ENCODE measurements at regions of chr10 and their contacts with region 1.

Region 1: DNA sequence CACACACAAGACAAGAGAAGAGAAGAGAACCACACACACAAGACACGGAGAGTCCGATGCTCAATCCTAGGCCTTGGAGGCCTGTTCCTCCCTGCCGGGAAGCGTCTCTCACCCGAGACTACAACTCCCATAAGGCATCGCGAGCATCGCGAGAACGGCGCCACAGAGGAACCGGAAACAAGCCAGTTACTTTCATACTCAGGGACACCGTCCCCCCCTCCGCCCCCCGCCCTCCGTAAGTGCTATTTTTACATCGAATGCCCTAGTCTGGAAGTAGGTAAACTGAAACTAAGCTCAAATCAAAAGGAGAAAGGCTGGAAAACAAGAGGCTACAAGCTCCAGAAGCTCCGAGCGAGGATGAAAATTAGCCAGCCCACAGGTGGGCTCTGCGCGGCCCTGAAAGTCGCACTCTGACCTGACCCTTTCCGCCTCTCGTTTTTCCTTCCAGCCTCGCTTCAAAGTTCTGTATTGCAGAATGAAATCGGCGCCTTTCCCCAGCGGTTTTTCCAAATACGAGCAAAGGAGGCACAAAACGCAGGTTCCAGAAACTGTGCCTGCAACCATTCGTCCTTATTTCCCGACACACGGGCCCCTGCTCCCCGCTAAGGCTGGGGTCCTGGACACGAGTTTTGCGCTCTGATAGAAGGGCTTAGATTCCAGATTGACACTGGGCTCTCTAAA is 11.5 kb upstream of the DNAJC12 start:
- DNase-seq: peak; percentile 98
- H3K4me3 ChIP-seq: peak overlapping the region; percentile 66 to 92 (median 70)
- H3K27ac ChIP-seq: peak overlapping the region; percentile 88 to 98 (median 94)
- H3K4me1 ChIP-seq: peaks cover 6 to 9% (median 8%) of the 10 kb centered on the region in 4 donors
- H3K27me3 ChIP-seq: no peaks in the 10 kb centered on the region
- CTCF ChIP-seq: peak in 1 of 3 experiments; percentile 23
- EP300 ChIP-seq: no peak
- POLR2A ChIP-seq: no peak

Region 2: GRCh38 chr10:67959839-67960476 is 110.5 kb after region 1 on chr10:
- intact Hi-C with region 1: no loop called
- DNase-seq: no peak
- H3K4me3 ChIP-seq: no peak overlapping the region
- H3K27ac ChIP-seq: no peak overlapping the region
- H3K4me1 ChIP-seq: no peaks in the 10 kb centered on the region
- H3K27me3 ChIP-seq: no peaks in the 10 kb centered on the region
- CTCF ChIP-seq: no peak
- EP300 ChIP-seq: no peak
- POLR2A ChIP-seq: no peak

Region 3: DNA sequence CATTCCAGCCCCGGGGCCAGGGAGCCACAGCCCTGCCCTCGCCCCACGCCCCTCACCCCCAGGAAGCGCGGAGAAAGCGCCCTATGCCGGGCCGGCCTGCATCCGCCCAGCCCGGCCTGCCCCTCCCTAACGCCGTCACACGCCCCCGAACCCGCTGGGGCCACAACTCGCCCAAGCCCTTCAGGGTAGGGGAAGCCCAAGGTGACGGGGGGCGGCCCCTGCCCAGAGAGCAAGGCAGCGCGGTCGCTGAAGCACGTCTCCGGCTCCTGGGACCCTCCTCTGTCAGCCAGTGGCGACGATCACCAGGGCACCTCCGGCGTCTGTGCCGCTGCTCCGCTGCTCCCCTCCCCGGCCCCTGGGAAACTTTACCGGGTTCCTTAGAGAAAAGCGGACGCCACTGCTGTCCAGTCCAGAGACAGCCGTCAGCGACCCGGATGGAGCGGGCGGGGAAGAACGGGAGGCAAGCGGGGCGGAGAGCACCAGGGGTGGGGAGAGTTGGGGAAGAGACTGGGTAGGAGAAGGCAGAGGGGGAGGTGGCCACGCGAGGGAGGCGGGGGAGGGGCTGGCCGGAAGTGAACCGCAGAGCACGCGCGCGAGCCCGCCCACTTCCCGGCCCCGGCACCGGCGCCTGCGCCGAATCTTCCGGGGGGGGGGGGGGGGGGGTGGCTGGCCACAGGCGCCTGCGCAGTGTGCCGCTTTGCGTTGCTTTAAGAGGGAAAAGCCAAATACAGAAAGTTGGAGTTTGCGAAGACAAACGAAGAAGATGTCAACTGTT is 225.5 kb after region 1 on chr10 and contains the start of gene HERC4:
- intact Hi-C with region 1: loop called (anchors 10 kb)
- DNase-seq: peak; percentile 98
- H3K4me3 ChIP-seq: peak within 1 kb of the TSS; percentile 74 to 95 (median 90)
- H3K27ac ChIP-seq: peak within 1 kb of the TSS; percentile 94 to 99 (median 99)
- H3K4me1 ChIP-seq: peaks cover 16 to 41% (median 38%) of the 10 kb centered on the region in 4 donors
- H3K27me3 ChIP-seq: no peaks in the 10 kb centered on the region
- CTCF ChIP-seq: no peak
- EP300 ChIP-seq: no peak
- POLR2A ChIP-seq: peak; percentile 76
- total RNA-seq, gene HERC4: 24.9 to 42.4 (median 30.1) TPM

Region 4: DNA sequence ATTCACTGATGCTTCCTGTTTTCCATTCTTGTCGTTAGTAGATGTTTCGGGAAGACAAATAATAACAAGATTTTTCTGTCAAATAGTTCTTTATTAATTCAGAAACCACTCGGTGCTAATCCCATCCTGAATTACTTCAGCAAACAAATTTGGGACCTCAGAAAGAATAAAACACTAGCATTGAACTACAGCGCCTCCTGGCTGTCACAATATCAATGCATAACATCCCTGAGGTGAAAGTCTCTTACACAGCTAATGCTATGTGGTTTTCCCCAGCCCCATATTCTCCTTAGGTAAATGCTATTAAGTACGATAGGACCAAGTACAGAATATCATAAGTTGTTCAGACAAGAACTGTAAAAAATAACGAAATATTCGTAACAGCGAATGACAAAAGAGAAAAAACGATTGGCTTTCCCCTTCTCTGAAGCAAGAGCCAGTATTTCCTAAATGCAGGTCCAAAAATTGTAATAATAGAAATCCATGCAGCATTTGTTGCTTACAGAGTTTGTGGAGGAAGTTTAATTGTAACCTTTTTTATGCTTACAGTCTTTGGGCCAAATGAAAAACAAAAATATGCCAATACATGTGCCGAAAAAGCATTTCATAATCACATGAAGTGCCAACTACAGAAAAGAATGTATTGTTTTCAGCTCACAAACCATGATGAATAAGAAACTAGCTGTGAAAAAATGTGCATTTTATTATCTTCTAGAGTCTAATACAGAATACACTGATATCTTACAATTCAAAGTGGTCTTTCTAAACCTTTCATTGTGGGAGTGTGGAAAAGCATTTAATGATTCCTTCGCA is 307.1 kb after region 1 on chr10:
- intact Hi-C with region 1: loop called (anchors 2 kb)
- DNase-seq: no peak
- H3K4me3 ChIP-seq: no peak overlapping the region
- H3K27ac ChIP-seq: no peak overlapping the region
- H3K4me1 ChIP-seq: peaks cover 15 to 21% (median 17%) of the 10 kb centered on the region in 4 donors
- H3K27me3 ChIP-seq: no peaks in the 10 kb centered on the region
- CTCF ChIP-seq: peak; percentile 81 to 84 (median 83)
- EP300 ChIP-seq: no peak
- POLR2A ChIP-seq: no peak

Measured in esophagus muscularis mucosa (tissue), 4 donors.